ENCODE measurements at regions of chr1 and their contacts with region 1.

Region 1: GRCh38 chr1:222021129-222021528 is 279.2 kb upstream of the DUSP10 start:
- DNase-seq: no peak
- ATAC-seq: no peak
- H3K4me3 Mint-ChIP-seq: no peak overlapping the region
- H3K27ac Mint-ChIP-seq: no peak overlapping the region
- H3K4me1 Mint-ChIP-seq: no peaks in the 10 kb centered on the region
- H3K27me3 Mint-ChIP-seq: peaks cover 3% of the 10 kb centered on the region

Region 2: GRCh38 chr1:221511797-221512196 is 509.3 kb before region 1 on chr1:
- CTCF ChIA-PET with region 1: no interaction called
- POLR2A ChIA-PET with region 1: interaction called, 12 read pairs
- intact Hi-C with region 1: no loop called
- DNase-seq: no peak
- ATAC-seq: no peak
- H3K4me3 Mint-ChIP-seq: no peak overlapping the region
- H3K27ac Mint-ChIP-seq: no peak overlapping the region
- H3K4me1 Mint-ChIP-seq: no peaks in the 10 kb centered on the region
- H3K27me3 Mint-ChIP-seq: no peaks in the 10 kb centered on the region

Region 3: GRCh38 chr1:222275729-222276465 is 254.8 kb after region 1 on chr1:
- CTCF ChIA-PET with region 1: no interaction called
- POLR2A ChIA-PET with region 1: no interaction called
- intact Hi-C with region 1: no loop called
- DNase-seq: no peak
- ATAC-seq: no peak
- H3K4me3 Mint-ChIP-seq: no peak overlapping the region
- H3K27ac Mint-ChIP-seq: no peak overlapping the region
- H3K4me1 Mint-ChIP-seq: no peaks in the 10 kb centered on the region
- H3K27me3 Mint-ChIP-seq: no peaks in the 10 kb centered on the region

Measured in activated CD4-positive, alpha-beta T cell treated with anti-CD3 and anti-CD28 coated beads for 36 hours (primary cell).